ENCODE measurements at regions of chr9 and their contacts with region 1.

Region 1: GRCh38 chr9:130984521-130984920 is 24.5 kb upstream of the LAMC3 start:
- DNase-seq: no peak
- ATAC-seq: no peak
- H3K4me3 ChIP-seq: no peak overlapping the region
- H3K27ac ChIP-seq: no peak overlapping the region
- H3K4me1 ChIP-seq: no peaks in the 10 kb centered on the region
- H3K27me3 ChIP-seq: peaks cover 14 to 92% of the 10 kb centered on the region in 2 experiments
- CTCF ChIP-seq: no peak
- EP300 ChIP-seq: no peak
- POLR2A ChIP-seq: no peak
- RAD21 ChIP-seq: no peak

Region 2: GRCh38 chr9:130908146-130908877 is 76.2 kb before region 1 on chr9:
- CTCF ChIA-PET with region 1: no interaction called
- POLR2A ChIA-PET with region 1: no interaction called
- in situ Hi-C with region 1: no loop called
- intact Hi-C with region 1: loop called (anchors 2 kb)
- DNase-seq: peak; percentile 45
- ATAC-seq: peak; percentile 45; the same call in 2 of the 3 replicates
- H3K4me3 ChIP-seq: no peak overlapping the region
- H3K27ac ChIP-seq: no peak overlapping the region
- H3K4me1 ChIP-seq: peaks cover 18% of the 10 kb centered on the region
- H3K27me3 ChIP-seq: peaks cover 15 to 84% of the 10 kb centered on the region in 2 experiments; a peak in 4 of 5 replicates
- CTCF ChIP-seq: no peak
- EP300 ChIP-seq: no peak
- POLR2A ChIP-seq: no peak
- RAD21 ChIP-seq: no peak

Region 3: GRCh38 chr9:131046581-131047202 is 62.2 kb after region 1 on chr9:
- CTCF ChIA-PET with region 1: no interaction called
- POLR2A ChIA-PET with region 1: no interaction called
- in situ Hi-C with region 1: no loop called
- intact Hi-C with region 1: no loop called
- DNase-seq: peak; percentile 53
- ATAC-seq: peak; percentile 90
- H3K4me3 ChIP-seq: peak overlapping the region in 1 of 3 experiments; percentile 40; a peak in 2 of 6 replicates
- H3K27ac ChIP-seq: no peak overlapping the region
- H3K4me1 ChIP-seq: no peaks in the 10 kb centered on the region
- H3K27me3 ChIP-seq: peaks cover 3 to 47% of the 10 kb centered on the region in 2 experiments; a peak in 3 of 5 replicates
- CTCF ChIP-seq: peak; percentile 96
- EP300 ChIP-seq: no peak
- POLR2A ChIP-seq: no peak
- RAD21 ChIP-seq: peak; percentile 92

Region 4: GRCh38 chr9:131237931-131238401 is 253.4 kb after region 1 on chr9:
- CTCF ChIA-PET with region 1: no interaction called
- POLR2A ChIA-PET with region 1: no interaction called
- in situ Hi-C with region 1: no loop called
- intact Hi-C with region 1: no loop called
- DNase-seq: no peak
- ATAC-seq: peak; percentile 48
- H3K4me3 ChIP-seq: peak overlapping the region in 1 of 3 experiments; percentile 30; a peak in 1 of 6 replicates
- H3K27ac ChIP-seq: no peak overlapping the region
- H3K4me1 ChIP-seq: peaks cover 32% of the 10 kb centered on the region
- H3K27me3 ChIP-seq: no peaks in the 10 kb centered on the region
- CTCF ChIP-seq: no peak
- EP300 ChIP-seq: no peak
- POLR2A ChIP-seq: no peak
- RAD21 ChIP-seq: no peak